Activated CD4-positive, alpha-beta T cell treated with anti-CD3 and anti-CD28 coated beads, Interleukin-2, amount 10 ng/mL, durations not matched to agents 24 days and 14 days (primary cell): ENCODE measurements at regions of chr7 and their contacts with region 1.

Region 1: DNA sequence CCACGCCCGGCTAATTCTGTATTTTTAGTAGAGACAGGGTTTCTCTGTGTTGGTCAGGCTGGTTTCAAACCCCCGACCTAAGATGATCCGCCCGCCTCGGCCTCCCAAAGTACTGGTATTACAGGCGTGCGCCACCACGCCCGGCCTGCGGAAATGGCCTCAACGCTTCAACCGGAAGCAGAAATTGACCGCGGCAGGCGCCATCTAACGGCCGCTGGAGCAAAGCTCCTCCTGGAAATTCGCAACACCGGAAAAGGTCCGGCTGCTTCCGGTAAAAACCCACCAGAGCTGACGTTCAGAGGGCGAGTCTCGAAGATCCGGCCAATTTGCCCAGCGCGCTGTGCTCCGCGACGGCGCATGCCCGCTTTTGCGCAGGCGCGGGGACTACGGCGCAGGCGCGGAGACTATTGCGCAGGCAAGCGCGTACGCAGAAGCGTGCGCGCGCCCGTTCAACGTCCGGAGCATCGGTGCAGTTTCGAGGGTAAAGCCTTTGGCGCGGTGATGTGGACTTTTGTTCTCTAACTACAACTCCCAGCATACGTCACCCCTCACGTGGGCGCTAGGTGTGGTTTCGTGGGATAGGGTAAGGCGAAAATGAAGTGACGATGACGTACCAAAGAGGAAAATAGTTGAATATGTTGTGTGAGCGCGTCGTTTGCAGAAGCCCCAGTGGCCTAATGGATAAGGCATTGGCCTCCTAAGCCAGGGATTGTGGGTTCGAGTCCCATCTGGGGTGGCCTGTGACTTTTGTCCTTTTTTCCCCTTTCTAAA is 915 bp upstream of the FMC1 start:
- DNase-seq: peak; percentile 99
- H3K4me3 Mint-ChIP-seq: peak overlapping the region; percentile 91
- H3K27ac Mint-ChIP-seq: peak overlapping the region; percentile 93
- H3K4me1 Mint-ChIP-seq: peaks cover 19% of the 10 kb centered on the region
- H3K27me3 Mint-ChIP-seq: peaks cover 4% of the 10 kb centered on the region

Region 2: DNA sequence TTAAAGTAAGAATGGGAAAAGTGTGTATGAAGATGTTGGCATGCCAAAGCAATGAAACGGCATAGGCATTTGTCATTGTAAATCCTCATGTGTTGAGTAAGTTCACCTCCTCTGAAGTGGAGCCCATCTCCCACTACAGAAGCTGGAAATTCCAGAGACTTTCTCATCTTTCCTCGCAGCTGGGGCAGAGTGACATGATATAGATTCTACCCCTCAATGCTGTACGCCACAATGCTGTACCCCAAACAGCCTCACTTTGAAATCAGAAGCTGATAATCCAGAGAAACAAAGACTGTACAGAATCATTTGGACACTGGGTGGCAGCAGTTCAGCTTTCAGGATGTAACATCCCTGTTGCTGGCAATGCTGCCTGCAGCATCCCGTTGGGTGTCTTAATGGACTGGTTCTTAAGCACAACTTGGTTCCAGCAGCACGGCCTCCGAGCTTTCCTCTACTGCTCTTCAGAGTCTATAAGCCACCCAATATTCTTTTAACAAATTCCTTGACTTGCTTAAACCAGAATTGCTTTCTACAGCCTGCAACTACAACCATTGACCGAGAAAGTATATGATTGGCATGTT is 323.2 kb before region 1 on chr7:
- intact Hi-C with region 1: loop called (anchors 10 kb)
- DNase-seq: peak; percentile 89
- H3K4me3 Mint-ChIP-seq: no peak overlapping the region
- H3K27ac Mint-ChIP-seq: no peak overlapping the region
- H3K4me1 Mint-ChIP-seq: peaks cover 7% of the 10 kb centered on the region
- H3K27me3 Mint-ChIP-seq: peaks cover 17% of the 10 kb centered on the region

Region 3: GRCh38 chr7:139043823-139044812 is 296.1 kb before region 1 on chr7:
- intact Hi-C with region 1: loop called (anchors 2 kb)
- DNase-seq: peak; percentile 88
- H3K4me3 Mint-ChIP-seq: peak overlapping the region; percentile 49
- H3K27ac Mint-ChIP-seq: peak overlapping the region; percentile 81
- H3K4me1 Mint-ChIP-seq: peaks cover 64% of the 10 kb centered on the region
- H3K27me3 Mint-ChIP-seq: no peaks in the 10 kb centered on the region

Region 4: GRCh38 chr7:139109188-139109982 is 230.8 kb before region 1 on chr7 and contains the start of gene ZC3HAV1:
- intact Hi-C with region 1: loop called (anchors 1 kb)
- DNase-seq: peak; percentile 97
- H3K4me3 Mint-ChIP-seq: peak within 1 kb of the TSS; percentile 97
- H3K27ac Mint-ChIP-seq: peak within 1 kb of the TSS; percentile 92
- H3K4me1 Mint-ChIP-seq: peaks cover 24% of the 10 kb centered on the region
- H3K27me3 Mint-ChIP-seq: no peaks in the 10 kb centered on the region
- total RNA-seq, gene ZC3HAV1: 86.1 and 90.5 TPM in 2 replicates

Region 5: GRCh38 chr7:139230774-139231512 is 109.3 kb before region 1 on chr7 and contains the start of gene UBN2:
- intact Hi-C with region 1: loop called (anchors 1 kb)
- DNase-seq: peak; percentile 97
- H3K4me3 Mint-ChIP-seq: peak within 1 kb of the TSS; percentile 98
- H3K27ac Mint-ChIP-seq: peak within 1 kb of the TSS; percentile 97
- H3K4me1 Mint-ChIP-seq: peaks cover 20% of the 10 kb centered on the region
- H3K27me3 Mint-ChIP-seq: peaks cover 21% of the 10 kb centered on the region
- total RNA-seq, gene UBN2: 12.5 and 15.2 TPM in 2 replicates